Mammary epithelial cell (primary cell): ENCODE measurements at regions of chr21 and their contacts with region 1.

Region 1: DNA sequence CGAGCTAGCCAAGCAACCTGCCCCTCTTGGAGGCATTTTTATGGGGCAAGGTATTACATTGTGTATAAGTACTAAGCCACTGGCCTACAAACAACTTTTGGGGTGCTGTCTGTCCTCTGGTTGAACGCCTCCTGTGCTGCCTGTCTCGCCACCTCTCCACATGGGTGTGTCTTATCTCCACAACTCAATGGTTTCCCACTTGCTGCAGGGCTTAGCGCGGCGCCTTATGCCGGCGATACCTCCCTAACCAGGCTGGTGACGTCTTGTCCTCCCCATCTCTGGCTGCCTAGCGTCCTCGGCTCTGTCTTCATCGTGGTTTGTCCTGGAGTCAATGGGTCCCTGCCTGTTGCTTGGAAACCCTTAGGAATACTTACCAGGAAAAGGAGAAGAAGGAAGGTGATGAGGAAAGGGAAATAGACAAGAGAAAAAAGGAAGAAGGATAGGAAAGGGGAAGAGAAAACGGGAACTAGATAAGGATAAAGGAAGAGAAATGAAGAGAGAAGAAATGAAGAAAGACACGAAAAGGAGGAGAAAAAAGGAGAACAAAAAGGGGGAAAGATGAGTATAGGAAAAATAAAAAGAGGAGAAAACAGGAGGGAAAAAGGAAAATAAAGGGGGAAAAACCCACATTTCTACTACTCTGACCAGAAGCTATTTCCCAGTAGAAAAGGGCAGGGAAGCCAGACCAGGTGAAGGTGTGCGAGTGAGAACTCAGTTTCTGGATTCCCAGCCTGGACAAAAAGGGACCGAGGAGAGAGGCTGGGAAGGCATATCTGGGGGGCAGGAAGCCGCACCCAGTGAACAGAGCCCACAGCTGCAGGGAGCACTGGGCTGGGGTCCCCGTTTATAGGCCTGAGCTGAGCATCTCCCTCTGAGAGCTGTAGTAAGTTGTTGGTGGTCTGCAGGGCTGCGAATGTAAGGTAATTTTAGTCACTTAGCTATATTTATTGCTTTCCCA is 86.2 kb downstream of the CLIC6 start:
- DNase-seq: no peak
- H3K4me3 ChIP-seq: no peak overlapping the region
- H3K27ac ChIP-seq: no peak overlapping the region
- H3K4me1 ChIP-seq: no peaks in the 10 kb centered on the region
- H3K27me3 ChIP-seq: no peaks in the 10 kb centered on the region
- CTCF ChIP-seq: no peak

Region 2: DNA sequence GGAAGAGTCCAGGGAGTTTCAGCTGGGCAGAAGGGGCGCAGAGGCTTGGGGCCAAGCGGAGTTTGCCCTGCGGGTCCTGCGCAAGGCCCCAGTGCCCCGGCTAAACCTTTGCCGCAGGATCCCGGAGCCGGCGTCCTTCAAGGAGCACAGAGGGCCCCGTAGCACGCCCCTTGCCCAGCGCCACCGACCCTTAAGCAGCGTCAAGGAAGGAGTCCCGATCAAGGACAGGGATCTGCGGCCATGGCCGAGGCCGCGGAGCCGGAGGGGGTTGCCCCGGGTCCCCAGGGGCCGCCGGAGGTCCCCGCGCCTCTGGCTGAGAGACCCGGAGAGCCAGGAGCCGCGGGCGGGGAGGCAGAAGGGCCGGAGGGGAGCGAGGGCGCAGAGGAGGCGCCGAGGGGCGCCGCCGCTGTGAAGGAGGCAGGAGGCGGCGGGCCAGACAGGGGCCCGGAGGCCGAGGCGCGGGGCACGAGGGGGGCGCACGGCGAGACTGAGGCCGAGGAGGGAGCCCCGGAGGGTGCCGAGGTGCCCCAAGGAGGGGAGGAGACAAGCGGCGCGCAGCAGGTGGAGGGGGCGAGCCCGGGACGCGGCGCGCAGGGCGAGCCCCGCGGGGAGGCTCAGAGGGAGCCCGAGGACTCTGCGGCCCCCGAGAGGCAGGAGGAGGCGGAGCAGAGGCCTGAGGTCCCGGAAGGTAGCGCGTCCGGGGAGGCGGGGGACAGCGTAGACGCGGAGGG is 85.7 kb before region 1 on chr21:
- CTCF ChIA-PET with region 1: no interaction called
- dilution Hi-C with region 1: no loop called
- in situ Hi-C with region 1: no loop called
- intact Hi-C with region 1: no loop called
- DNase-seq: no peak
- H3K4me3 ChIP-seq: no peak overlapping the region
- H3K27ac ChIP-seq: no peak overlapping the region
- H3K4me1 ChIP-seq: peaks cover 7% of the 10 kb centered on the region
- H3K27me3 ChIP-seq: peaks cover 34% of the 10 kb centered on the region
- CTCF ChIP-seq: no peak

Region 3: DNA sequence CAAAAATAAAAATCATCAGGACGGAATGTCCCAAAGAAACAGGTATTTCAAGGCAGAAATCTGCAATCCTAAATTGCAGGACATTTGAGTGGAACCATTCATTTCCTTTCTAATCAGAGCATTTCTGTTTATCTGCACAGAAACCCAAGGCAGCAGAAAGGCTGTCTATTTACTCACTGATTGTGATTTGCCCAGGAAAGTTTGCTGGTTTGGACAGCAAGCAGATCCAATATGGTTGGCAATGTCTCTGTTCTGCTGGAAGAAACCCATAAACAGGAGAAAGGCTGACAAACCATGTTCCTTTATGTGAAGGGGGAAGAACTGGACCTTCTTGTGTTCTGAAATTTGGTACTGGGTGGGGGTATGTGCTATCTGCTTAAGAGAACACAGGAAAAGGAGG is 33.9 kb after region 1 on chr21:
- CTCF ChIA-PET with region 1: no interaction called
- dilution Hi-C with region 1: loop called (anchors 5 kb)
- in situ Hi-C with region 1: no loop called
- intact Hi-C with region 1: no loop called
- DNase-seq: no peak
- H3K4me3 ChIP-seq: no peak overlapping the region
- H3K27ac ChIP-seq: no peak overlapping the region
- H3K4me1 ChIP-seq: no peaks in the 10 kb centered on the region
- H3K27me3 ChIP-seq: no peaks in the 10 kb centered on the region
- CTCF ChIP-seq: no peak